Esophagus squamous epithelium (tissue), 5 donors: ENCODE measurements at regions of chr20 and their contacts with region 1.

Region 1: DNA sequence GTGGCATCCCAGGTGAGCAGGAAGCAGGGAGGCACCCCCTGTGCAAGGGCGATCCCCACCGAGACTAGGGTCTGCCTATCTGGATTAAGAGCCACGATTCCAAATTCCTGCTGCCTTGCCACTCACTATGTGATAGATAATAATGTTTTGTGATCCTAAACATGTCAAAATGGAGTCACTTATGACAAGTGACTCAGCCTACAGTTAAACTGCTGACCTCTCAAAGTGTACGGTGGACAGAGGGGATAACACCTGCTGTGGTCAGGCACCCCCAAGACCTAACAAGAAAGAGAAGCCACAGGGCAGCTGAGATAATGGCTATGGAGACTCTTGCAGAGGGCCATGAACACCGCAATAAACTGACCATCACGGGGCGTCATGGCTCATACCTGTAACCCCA is 16.0 kb upstream of the SNTA1 start:
- DNase-seq: no peak
- H3K4me3 ChIP-seq: no peak overlapping the region
- H3K27ac ChIP-seq: no peak overlapping the region
- H3K4me1 ChIP-seq: no peaks in the 10 kb centered on the region
- H3K27me3 ChIP-seq: no peaks in the 10 kb centered on the region
- CTCF ChIP-seq: no peak
- POLR2A ChIP-seq: no peak

Region 2: DNA sequence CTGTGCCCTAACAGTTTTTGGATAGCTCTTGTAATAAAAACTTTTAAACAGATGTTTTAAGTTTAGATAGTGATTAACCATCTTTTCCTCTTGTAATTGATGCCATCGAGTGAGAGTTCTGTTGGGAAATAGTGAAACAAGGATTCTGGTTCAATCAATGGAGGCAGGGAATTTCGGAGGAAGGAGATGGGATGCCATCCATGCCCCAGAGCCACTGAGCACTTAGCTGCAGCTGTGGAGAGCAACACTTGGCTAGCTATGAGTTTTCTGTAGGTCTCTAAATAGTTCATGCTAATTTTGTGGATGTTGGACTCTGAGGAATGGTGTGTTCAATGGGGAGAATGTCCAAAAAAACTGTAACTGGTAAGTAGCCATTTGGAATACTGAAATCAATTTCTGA is 47.0 kb after region 1 on chr20:
- intact Hi-C with region 1: no loop called
- DNase-seq: no peak
- H3K4me3 ChIP-seq: no peak overlapping the region
- H3K27ac ChIP-seq: no peak overlapping the region
- H3K4me1 ChIP-seq: peaks cover 0 to 5% (median 0%) of the 10 kb centered on the region in 3 donors
- H3K27me3 ChIP-seq: no peaks in the 10 kb centered on the region
- CTCF ChIP-seq: no peak
- POLR2A ChIP-seq: no peak

Region 3: GRCh38 chr20:33653218-33653899 is 193.8 kb after region 1 on chr20:
- intact Hi-C with region 1: loop called (anchors 5 kb)
- DNase-seq: no peak
- H3K4me3 ChIP-seq: peak overlapping the region in 1 of 4 donors; percentile 28
- H3K27ac ChIP-seq: peak overlapping the region; percentile 4 to 84 (median 39)
- H3K4me1 ChIP-seq: peaks cover 27 to 80% (median 40%) of the 10 kb centered on the region in 3 donors
- H3K27me3 ChIP-seq: no peaks in the 10 kb centered on the region
- CTCF ChIP-seq: peak; percentile 64 to 71 (median 66)
- POLR2A ChIP-seq: no peak

Region 4: GRCh38 chr20:33666293-33667244 is 207.0 kb after region 1 on chr20 and contains the start of gene ACTL10:
- intact Hi-C with region 1: loop called (anchors 5 kb)
- DNase-seq: peak; percentile 80
- H3K4me3 ChIP-seq: peak within 1 kb of the TSS; percentile 49 to 72 (median 58)
- H3K27ac ChIP-seq: peak within 1 kb of the TSS; percentile 86 to 93 (median 90)
- H3K4me1 ChIP-seq: peaks cover 31 to 74% (median 41%) of the 10 kb centered on the region in 3 donors
- H3K27me3 ChIP-seq: no peaks in the 10 kb centered on the region
- CTCF ChIP-seq: peak in 2 of 6 experiments; percentile 20 to 26
- POLR2A ChIP-seq: peak in 3 of 4 donors; percentile 58 to 90 (median 60)
- total RNA-seq, gene ACTL10: 1.8 to 4.4 (median 3.5) TPM